Endothelial cell of umbilical vein (primary cell): ENCODE measurements at regions of chr12 and their contacts with region 1.

Region 1: DNA sequence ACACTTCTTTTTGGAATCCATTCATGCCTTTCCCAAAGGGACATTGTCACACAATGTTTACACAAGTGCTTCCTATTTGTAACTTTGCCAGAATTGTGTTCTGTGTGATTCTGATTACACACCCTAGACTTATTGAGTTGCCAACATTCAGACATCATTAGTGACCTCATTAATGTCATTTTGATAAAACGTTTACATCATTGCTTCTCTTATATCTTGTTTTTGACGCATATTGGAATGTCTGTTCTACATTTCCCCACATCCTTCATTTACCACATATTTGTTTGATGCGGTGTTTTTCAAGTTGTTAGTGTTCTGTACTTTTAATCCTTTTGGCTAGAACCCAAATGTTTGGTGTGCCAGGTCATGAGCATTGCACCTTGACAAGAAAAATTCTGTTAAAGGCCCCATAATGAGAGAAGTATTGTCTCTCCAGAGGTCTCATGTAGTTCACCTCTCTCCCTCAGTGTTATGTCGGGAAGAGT is 305.5 kb downstream of the AEBP2 start:
- DNase-seq: peak; percentile 99
- H3K4me3 ChIP-seq: no peak overlapping the region
- H3K27ac ChIP-seq: peak overlapping the region; percentile 96
- H3K4me1 ChIP-seq: peaks cover 22% of the 10 kb centered on the region
- H3K27me3 ChIP-seq: no peaks in the 10 kb centered on the region
- CTCF ChIP-seq: no peak
- POLR2A ChIP-seq: peak; percentile 66

Region 2: GRCh38 chr12:19507823-19508222 is 237.0 kb before region 1 on chr12:
- CTCF ChIA-PET with region 1: interaction called, 37 read pairs
- POLR2A ChIA-PET with region 1: no interaction called
- dilution Hi-C with region 1: no loop called
- intact Hi-C with region 1: loop called (anchors 2 kb)
- DNase-seq: peak; percentile 75
- H3K4me3 ChIP-seq: no peak overlapping the region
- H3K27ac ChIP-seq: no peak overlapping the region
- H3K4me1 ChIP-seq: peaks cover 7% of the 10 kb centered on the region
- H3K27me3 ChIP-seq: no peaks in the 10 kb centered on the region
- CTCF ChIP-seq: peak in 1 of 2 donors; percentile 23
- POLR2A ChIP-seq: no peak

Region 3: DNA sequence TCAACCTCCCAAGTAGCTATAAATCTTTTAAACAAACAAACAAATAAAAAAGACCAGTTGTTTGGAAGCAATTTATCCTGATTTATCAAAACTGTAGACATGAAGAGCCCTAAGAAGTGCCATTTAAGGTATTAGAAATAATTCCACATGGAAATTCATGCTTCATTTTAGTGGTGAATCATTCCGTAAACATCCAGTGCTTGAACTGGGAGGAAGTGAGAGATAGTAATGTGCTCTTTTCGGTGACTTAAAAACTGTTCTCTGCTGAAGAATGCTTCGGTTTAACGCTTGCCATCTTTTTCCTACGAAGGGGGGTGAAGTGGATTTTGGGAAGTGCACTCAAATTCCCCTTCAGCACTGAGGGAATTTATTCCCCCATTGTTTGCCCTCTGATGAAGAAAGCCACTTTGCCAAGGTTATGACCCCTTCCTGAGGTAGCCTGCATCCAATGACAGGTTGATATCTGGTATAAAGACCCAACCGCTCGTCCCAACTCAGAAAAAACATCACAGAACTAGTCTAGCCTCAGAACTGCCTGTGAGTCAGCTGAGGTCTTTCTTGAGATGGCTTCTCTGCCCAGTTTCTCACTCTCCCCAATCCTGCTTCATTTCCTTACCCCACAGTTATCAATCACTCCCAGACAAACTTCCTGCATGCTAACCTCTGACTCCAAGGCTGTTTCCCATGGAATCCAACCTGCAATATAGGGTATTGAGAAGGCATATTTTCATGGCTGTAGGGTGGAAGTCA is 61.4 kb before region 1 on chr12:
- CTCF ChIA-PET with region 1: interaction called, 8 read pairs
- POLR2A ChIA-PET with region 1: no interaction called
- dilution Hi-C with region 1: no loop called
- intact Hi-C with region 1: loop called (anchors 1 kb)
- DNase-seq: peak; percentile 99
- H3K4me3 ChIP-seq: no peak overlapping the region
- H3K27ac ChIP-seq: peak overlapping the region; percentile 97
- H3K4me1 ChIP-seq: peaks cover 28% of the 10 kb centered on the region
- H3K27me3 ChIP-seq: no peaks in the 10 kb centered on the region
- CTCF ChIP-seq: no peak
- POLR2A ChIP-seq: peak; percentile 48

Region 4: GRCh38 chr12:19800884-19801283 is 56.1 kb after region 1 on chr12:
- CTCF ChIA-PET with region 1: no interaction called
- POLR2A ChIA-PET with region 1: no interaction called
- dilution Hi-C with region 1: no loop called
- intact Hi-C with region 1: loop called (anchors 2 kb)
- DNase-seq: peak; percentile 91
- H3K4me3 ChIP-seq: no peak overlapping the region
- H3K27ac ChIP-seq: peak overlapping the region; percentile 71
- H3K4me1 ChIP-seq: peaks cover 25% of the 10 kb centered on the region
- H3K27me3 ChIP-seq: no peaks in the 10 kb centered on the region
- CTCF ChIP-seq: no peak
- POLR2A ChIP-seq: no peak

Region 5: DNA sequence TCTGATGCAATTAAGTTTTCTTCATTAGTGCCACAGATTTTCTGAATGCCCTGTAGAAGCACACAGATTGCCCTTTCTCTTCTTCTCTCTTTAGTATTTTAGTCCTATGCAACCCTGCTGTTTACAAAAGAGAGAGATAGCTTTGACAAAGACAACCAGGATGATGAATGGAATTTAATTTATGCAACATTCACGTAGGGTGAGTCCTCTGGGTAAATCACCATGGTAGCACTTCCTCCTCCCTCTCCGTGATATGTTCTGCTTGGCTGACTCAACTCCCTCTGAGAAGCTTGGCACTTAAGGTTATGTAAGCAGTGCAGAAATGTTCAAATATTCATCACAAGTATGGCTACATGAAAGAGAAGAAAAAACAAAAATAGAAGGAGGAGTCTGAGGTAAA is 222.7 kb after region 1 on chr12:
- CTCF ChIA-PET with region 1: no interaction called
- POLR2A ChIA-PET with region 1: no interaction called
- dilution Hi-C with region 1: no loop called
- intact Hi-C with region 1: loop called (anchors 2 kb)
- DNase-seq: peak; percentile 85
- H3K4me3 ChIP-seq: no peak overlapping the region
- H3K27ac ChIP-seq: peak overlapping the region; percentile 65
- H3K4me1 ChIP-seq: peaks cover 43% of the 10 kb centered on the region
- H3K27me3 ChIP-seq: no peaks in the 10 kb centered on the region
- CTCF ChIP-seq: no peak
- POLR2A ChIP-seq: no peak

Region 6: DNA sequence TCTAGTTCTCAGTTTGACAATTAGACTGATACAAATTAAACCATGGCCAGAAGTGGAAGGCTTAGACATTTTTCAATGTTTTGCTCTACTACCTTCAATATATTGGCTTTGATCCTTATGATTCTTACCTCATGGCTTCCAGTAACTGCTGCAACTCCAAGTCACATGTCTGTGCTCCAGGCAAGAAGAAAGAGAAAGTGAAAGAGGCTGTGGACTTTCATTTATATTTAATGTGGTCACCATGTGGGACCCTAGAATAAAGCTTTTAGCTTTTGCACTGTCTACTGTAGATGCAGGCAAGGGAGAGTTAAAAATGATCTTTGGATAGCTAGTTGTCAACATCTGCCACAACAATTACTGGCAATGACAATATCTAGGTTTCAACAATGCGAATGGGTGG is 409.3 kb after region 1 on chr12:
- CTCF ChIA-PET with region 1: no interaction called
- POLR2A ChIA-PET with region 1: no interaction called
- dilution Hi-C with region 1: no loop called
- intact Hi-C with region 1: loop called (anchors 5 kb)
- DNase-seq: no peak
- H3K4me3 ChIP-seq: no peak overlapping the region
- H3K27ac ChIP-seq: no peak overlapping the region
- H3K4me1 ChIP-seq: peaks cover 8% of the 10 kb centered on the region
- H3K27me3 ChIP-seq: no peaks in the 10 kb centered on the region
- CTCF ChIP-seq: no peak
- POLR2A ChIP-seq: no peak

Region 7: GRCh38 chr12:20463913-20464524 is 719.2 kb after region 1 on chr12:
- CTCF ChIA-PET with region 1: no interaction called
- POLR2A ChIA-PET with region 1: no interaction called
- dilution Hi-C with region 1: no loop called
- intact Hi-C with region 1: loop called (anchors 5 kb)
- DNase-seq: peak; percentile 44
- H3K4me3 ChIP-seq: no peak overlapping the region
- H3K27ac ChIP-seq: no peak overlapping the region
- H3K4me1 ChIP-seq: no peaks in the 10 kb centered on the region
- H3K27me3 ChIP-seq: no peaks in the 10 kb centered on the region
- CTCF ChIP-seq: peak; percentile 26 to 41
- POLR2A ChIP-seq: no peak